ENCODE measurements at regions of chr18 and their contacts with region 1.

Region 1: GRCh38 chr18:37341016-37341415 is 224.6 kb downstream of the CELF4 start:
- DNase-seq: no peak
- H3K4me3 ChIP-seq: no peak overlapping the region
- H3K4me3 Mint-ChIP-seq: no peak overlapping the region
- H3K27ac Mint-ChIP-seq: no peak overlapping the region
- H3K4me1 ChIP-seq: no peaks in the 10 kb centered on the region
- H3K4me1 Mint-ChIP-seq: no peaks in the 10 kb centered on the region
- H3K27me3 ChIP-seq: no peaks in the 10 kb centered on the region
- H3K27me3 Mint-ChIP-seq: peaks cover 6% of the 10 kb centered on the region
- CTCF ChIP-seq: no peak

Region 2: GRCh38 chr18:36887114-36887513 is 453.9 kb before region 1 on chr18:
- CTCF ChIA-PET with region 1: no interaction called
- POLR2A ChIA-PET with region 1: no interaction called
- intact Hi-C with region 1: no loop called
- DNase-seq: no peak
- H3K4me3 ChIP-seq: no peak overlapping the region
- H3K4me3 Mint-ChIP-seq: no peak overlapping the region
- H3K27ac Mint-ChIP-seq: no peak overlapping the region
- H3K4me1 ChIP-seq: no peaks in the 10 kb centered on the region
- H3K4me1 Mint-ChIP-seq: no peaks in the 10 kb centered on the region
- H3K27me3 ChIP-seq: no peaks in the 10 kb centered on the region
- H3K27me3 Mint-ChIP-seq: no peaks in the 10 kb centered on the region
- CTCF ChIP-seq: no peak

Region 3: GRCh38 chr18:37385846-37386778 is 45.1 kb after region 1 on chr18:
- CTCF ChIA-PET with region 1: no interaction called
- POLR2A ChIA-PET with region 1: no interaction called
- intact Hi-C with region 1: loop called (anchors 2 kb)
- DNase-seq: no peak
- H3K4me3 ChIP-seq: no peak overlapping the region
- H3K4me3 Mint-ChIP-seq: no peak overlapping the region
- H3K27ac Mint-ChIP-seq: no peak overlapping the region
- H3K4me1 ChIP-seq: no peaks in the 10 kb centered on the region
- H3K4me1 Mint-ChIP-seq: no peaks in the 10 kb centered on the region
- H3K27me3 ChIP-seq: no peaks in the 10 kb centered on the region
- H3K27me3 Mint-ChIP-seq: peaks cover 6% of the 10 kb centered on the region
- CTCF ChIP-seq: peak; percentile 31 to 36

Region 4: DNA sequence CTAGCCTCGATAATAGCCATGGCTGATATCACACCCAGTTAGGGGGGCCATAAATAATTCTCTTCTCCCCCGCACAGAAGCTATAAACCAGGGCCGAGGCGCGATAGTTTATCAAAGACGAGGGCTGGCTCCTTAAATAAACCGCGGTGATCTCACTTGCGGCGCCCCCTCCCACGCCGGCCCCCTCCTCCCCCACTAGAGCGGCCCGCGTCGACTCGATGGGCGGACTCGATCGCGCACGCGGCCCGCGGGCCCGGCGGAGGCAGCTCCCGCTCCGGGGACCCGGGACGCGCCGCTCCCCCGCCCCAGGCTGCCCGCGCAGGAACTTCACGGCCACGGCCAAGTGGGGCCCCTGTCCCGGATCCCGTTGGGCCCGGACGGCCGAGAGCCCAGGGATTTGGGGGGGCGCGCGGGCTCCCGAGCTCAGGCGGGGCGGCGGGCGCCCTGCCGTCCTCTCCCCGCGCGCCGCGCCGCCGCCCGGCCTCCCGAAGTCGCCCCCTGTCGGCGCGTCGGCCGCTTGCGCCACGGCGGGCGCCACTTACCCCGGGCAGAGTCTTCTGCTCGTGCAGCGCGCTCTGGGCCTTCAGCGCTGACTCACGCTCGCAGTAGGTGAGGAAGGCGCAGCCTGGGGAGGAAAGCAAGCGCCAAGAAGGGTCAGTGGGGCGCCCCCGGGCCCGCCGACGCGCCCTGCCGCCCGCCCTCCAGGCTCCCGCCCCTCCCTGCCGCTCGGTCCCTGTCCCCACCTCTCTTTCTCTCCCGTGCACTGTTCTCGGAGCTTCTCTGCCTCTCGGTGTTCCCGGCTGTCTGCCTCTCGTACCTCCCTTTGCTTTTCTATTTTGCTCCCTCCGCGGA is 144.2 kb after region 1 on chr18:
- CTCF ChIA-PET with region 1: no interaction called
- POLR2A ChIA-PET with region 1: no interaction called
- intact Hi-C with region 1: no loop called
- DNase-seq: no peak
- H3K4me3 ChIP-seq: no peak overlapping the region
- H3K4me3 Mint-ChIP-seq: no peak overlapping the region
- H3K27ac Mint-ChIP-seq: no peak overlapping the region
- H3K4me1 ChIP-seq: no peaks in the 10 kb centered on the region
- H3K4me1 Mint-ChIP-seq: no peaks in the 10 kb centered on the region
- H3K27me3 ChIP-seq: no peaks in the 10 kb centered on the region
- H3K27me3 Mint-ChIP-seq: peaks cover 21% of the 10 kb centered on the region
- CTCF ChIP-seq: no peak

Measured in Caco-2 (cell line).